Heart left ventricle (tissue), 16 donors: ENCODE measurements at regions of chr12 and their contacts with region 1.

Region 1: GRCh38 chr12:121712461-121713256 is at the start of gene TMEM120B:
- DNase-seq: peak; percentile 88 to 95 (median 90)
- ATAC-seq: peak; percentile 87 to 96 (median 94)
- H3K4me3 ChIP-seq: peak within 1 kb of the TSS; percentile 65 to 99 (median 96)
- H3K27ac ChIP-seq: peak within 1 kb of the TSS; percentile 83 to 97 (median 94)
- H3K4me1 ChIP-seq: peaks cover 0 to 29% (median 21%) of the 10 kb centered on the region in 12 donors
- H3K27me3 ChIP-seq: no peaks in the 10 kb centered on the region
- CTCF ChIP-seq: no peak
- POLR2A ChIP-seq: peak; percentile 71 to 86
- total RNA-seq, gene TMEM120B: 5.8 to 13.2 (median 7.6) TPM

Region 2: GRCh38 chr12:121326996-121327674 is 385.5 kb before region 1 on chr12:
- intact Hi-C with region 1: no loop called
- DNase-seq: no peak
- ATAC-seq: peak in 1 of 4 donors; percentile 13
- H3K4me3 ChIP-seq: no peak overlapping the region
- H3K27ac ChIP-seq: no peak overlapping the region
- H3K4me1 ChIP-seq: peaks cover 0 to 9% (median 0%) of the 10 kb centered on the region in 12 donors
- H3K27me3 ChIP-seq: no peaks in the 10 kb centered on the region
- CTCF ChIP-seq: no peak
- POLR2A ChIP-seq: no peak

Region 3: DNA sequence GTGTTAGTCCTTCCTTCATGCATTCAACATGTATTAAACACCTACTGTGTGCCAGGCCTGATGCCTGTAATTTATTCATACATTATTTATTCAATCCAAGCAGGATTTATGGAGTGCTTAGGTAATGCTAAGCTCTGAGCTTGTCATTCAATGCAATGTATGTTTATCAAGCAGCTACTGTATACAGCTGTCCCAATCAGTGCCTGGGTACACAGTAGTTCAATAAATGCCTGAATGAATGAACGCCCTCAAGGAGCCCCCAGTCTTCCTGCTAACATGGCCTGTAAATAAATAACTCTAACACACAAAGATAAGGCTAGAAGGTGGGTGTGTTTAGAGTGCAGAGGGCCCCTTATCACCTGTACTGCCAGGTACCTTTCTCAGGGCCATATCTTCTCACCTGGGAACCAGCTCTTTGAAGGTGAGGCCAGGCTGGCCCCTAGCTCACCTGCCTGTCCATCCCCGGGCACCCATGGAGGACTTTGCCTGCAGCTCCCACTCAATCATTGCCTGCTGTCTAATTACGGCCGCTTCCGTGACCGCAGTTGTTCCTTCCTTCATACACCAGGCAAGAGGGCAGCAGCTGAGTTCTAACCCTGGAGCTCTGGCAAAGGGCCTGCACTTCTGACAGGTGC is 111.8 kb before region 1 on chr12:
- intact Hi-C with region 1: no loop called
- DNase-seq: no peak
- ATAC-seq: no peak
- H3K4me3 ChIP-seq: no peak overlapping the region
- H3K27ac ChIP-seq: no peak overlapping the region
- H3K4me1 ChIP-seq: no peaks in the 10 kb centered on the region
- H3K27me3 ChIP-seq: no peaks in the 10 kb centered on the region
- CTCF ChIP-seq: no peak
- POLR2A ChIP-seq: no peak

Region 4: GRCh38 chr12:121753844-121754264 is 41.2 kb after region 1 on chr12:
- intact Hi-C with region 1: loop called in 1 of 10 experiments (anchors 5 kb)
- DNase-seq: peak; percentile 68 to 87 (median 71)
- ATAC-seq: peak; percentile 83 to 92 (median 88)
- H3K4me3 ChIP-seq: no peak overlapping the region
- H3K27ac ChIP-seq: peak overlapping the region in 11 of 12 donors; percentile 41 to 86 (median 71)
- H3K4me1 ChIP-seq: peaks cover 0 to 21% (median 10%) of the 10 kb centered on the region in 12 donors
- H3K27me3 ChIP-seq: no peaks in the 10 kb centered on the region
- CTCF ChIP-seq: no peak
- POLR2A ChIP-seq: no peak

Region 5: GRCh38 chr12:121773011-121773777 is 60.5 kb after region 1 on chr12:
- intact Hi-C with region 1: loop called in 5 of 10 experiments (anchors 5 kb)
- DNase-seq: peak in 4 of 5 donors; percentile 66 to 87 (median 73)
- ATAC-seq: peak; percentile 58 to 72 (median 67)
- H3K4me3 ChIP-seq: peak overlapping the region in 1 of 12 donors; percentile 8
- H3K27ac ChIP-seq: peak overlapping the region in 10 of 12 donors; percentile 28 to 76 (median 68)
- H3K4me1 ChIP-seq: peaks cover 0 to 62% (median 21%) of the 10 kb centered on the region in 12 donors
- H3K27me3 ChIP-seq: no peaks in the 10 kb centered on the region
- CTCF ChIP-seq: peak; percentile 64 to 82 (median 75)
- POLR2A ChIP-seq: no peak